HCT116 (cell line): ENCODE measurements at regions of chr10 and their contacts with region 1.

Region 1: DNA sequence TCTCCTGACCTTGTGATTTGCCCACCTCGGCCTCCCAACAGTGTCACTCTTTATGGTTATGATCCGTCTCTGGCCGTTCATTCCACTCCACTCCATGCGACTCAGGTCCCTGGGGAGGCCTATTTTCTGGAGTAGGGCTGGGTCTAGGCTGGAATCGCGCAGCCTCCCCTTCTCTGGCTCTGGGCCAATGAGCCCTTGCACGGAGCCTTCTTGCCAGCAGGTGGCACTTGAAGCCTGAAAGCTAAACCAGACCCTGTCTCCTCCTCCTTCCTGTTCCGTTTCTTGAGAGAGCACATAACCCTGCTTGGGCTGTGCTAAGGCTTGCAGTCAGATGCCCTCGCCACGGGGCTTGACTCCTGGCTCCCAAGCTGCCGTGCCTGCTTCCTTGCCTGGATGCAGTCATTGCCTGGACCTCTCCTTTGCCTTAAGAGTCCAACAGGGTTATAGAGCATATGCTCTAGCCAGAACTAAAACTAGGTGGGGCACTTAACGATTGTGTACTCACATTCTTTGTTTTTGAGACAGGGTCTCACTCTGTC is 9.6 kb upstream of the DNAJB12 start:
- DNase-seq: peak; percentile 82
- ATAC-seq: peak; percentile 94
- H3K4me3 ChIP-seq: peak overlapping the region in 1 of 2 experiments; percentile 22; a peak in 2 of 4 replicates
- H3K27ac ChIP-seq: 0 out of 2 replicates have a peak overlapping the region, but pooled peaks have one; percentile 21
- H3K4me1 ChIP-seq: peaks cover 7 to 19% of the 10 kb centered on the region in 2 experiments
- H3K27me3 ChIP-seq: no peaks in the 10 kb centered on the region
- CTCF ChIP-seq: peak; percentile 85 to 95 (median 85)
- POLR2A ChIP-seq: no peak
- RAD21 ChIP-seq: peak; percentile 98

Region 2: GRCh38 chr10:71634531-71635164 is 729.7 kb before region 1 on chr10:
- CTCF ChIA-PET with region 1: no interaction called
- POLR2A ChIA-PET with region 1: no interaction called
- RAD21 ChIA-PET with region 1: no interaction called
- intact Hi-C with region 1: no loop called
- DNase-seq: no peak
- ATAC-seq: no peak
- H3K4me3 ChIP-seq: no peak overlapping the region
- H3K27ac ChIP-seq: no peak overlapping the region
- H3K4me1 ChIP-seq: no peaks in the 10 kb centered on the region
- H3K27me3 ChIP-seq: no peaks in the 10 kb centered on the region
- CTCF ChIP-seq: no peak
- POLR2A ChIP-seq: no peak
- RAD21 ChIP-seq: no peak

Region 3: GRCh38 chr10:72379776-72380175 is 15.5 kb after region 1 on chr10:
- CTCF ChIA-PET with region 1: no interaction called
- POLR2A ChIA-PET with region 1: no interaction called
- RAD21 ChIA-PET with region 1: no interaction called
- intact Hi-C with region 1: no loop called
- DNase-seq: no peak
- ATAC-seq: no peak
- H3K4me3 ChIP-seq: no peak overlapping the region
- H3K27ac ChIP-seq: no peak overlapping the region
- H3K4me1 ChIP-seq: 0 out of 4 replicates have a peak, but pooled peaks cover 0 to under 1% of the 10 kb centered on the region in 2 experiments
- H3K27me3 ChIP-seq: no peaks in the 10 kb centered on the region
- CTCF ChIP-seq: no peak
- POLR2A ChIP-seq: no peak
- RAD21 ChIP-seq: no peak

Region 4: DNA sequence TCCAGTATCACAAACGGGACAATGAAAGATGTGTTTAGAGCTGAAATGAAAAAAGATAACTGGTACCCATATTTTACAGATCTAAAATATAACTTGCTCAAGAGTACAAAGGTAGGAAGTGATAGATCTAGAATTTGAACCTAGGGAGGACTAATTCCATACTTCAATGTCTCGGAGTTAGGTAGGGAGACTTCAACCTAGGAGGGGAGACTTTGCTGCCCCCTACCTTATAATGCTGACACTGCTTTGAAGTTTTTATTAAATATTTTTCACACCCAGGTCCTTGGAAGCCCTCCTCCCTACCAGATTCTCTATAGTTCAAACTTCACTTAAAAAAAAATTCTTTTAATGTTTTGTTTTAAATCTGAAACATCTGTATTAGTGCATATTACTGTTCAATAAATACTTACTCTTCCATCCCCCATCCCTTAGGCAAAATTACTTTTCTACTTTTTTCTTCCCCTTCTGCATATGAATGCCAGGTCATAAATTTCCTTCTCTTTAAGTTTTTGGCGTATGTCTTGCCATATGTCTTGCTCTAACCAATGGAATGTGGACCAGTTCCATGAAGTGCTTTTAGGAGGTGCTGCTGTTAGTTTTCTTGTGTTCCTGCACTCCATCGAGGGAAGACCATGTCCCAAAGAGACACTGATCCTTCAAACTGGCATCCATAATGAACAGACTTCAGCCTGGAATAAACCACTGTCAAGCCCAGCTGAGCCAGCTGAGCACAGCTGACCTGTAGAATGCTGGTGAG is 203.8 kb after region 1 on chr10:
- CTCF ChIA-PET with region 1: no interaction called
- POLR2A ChIA-PET with region 1: no interaction called
- RAD21 ChIA-PET with region 1: no interaction called
- intact Hi-C with region 1: loop called (anchors 10 kb)
- DNase-seq: peak; percentile 10
- ATAC-seq: peak; percentile 91
- H3K4me3 ChIP-seq: peak overlapping the region in 1 of 2 experiments; percentile 10; a peak in 1 of 4 replicates
- H3K27ac ChIP-seq: peak overlapping the region; percentile 48; the same call in 1 of the 2 replicates
- H3K4me1 ChIP-seq: peaks cover 16 to 18% of the 10 kb centered on the region in 2 experiments
- H3K27me3 ChIP-seq: no peaks in the 10 kb centered on the region
- CTCF ChIP-seq: peak; percentile 26 to 65 (median 56); a peak in 4 of 6 replicates
- POLR2A ChIP-seq: no peak
- RAD21 ChIP-seq: peak; percentile 53

Region 5: GRCh38 chr10:72692057-72692910 is 328.0 kb after region 1 on chr10 and contains the start of gene MCU:
- CTCF ChIA-PET with region 1: no interaction called
- POLR2A ChIA-PET with region 1: no interaction called
- RAD21 ChIA-PET with region 1: no interaction called
- intact Hi-C with region 1: loop called (anchors 2 kb)
- DNase-seq: no peak
- ATAC-seq: peak; percentile 98
- H3K4me3 ChIP-seq: peak within 1 kb of the TSS; percentile 82 to 87
- H3K27ac ChIP-seq: peak within 1 kb of the TSS; percentile 66; the same call in 1 of the 2 replicates
- H3K4me1 ChIP-seq: peaks cover 3 to 24% of the 10 kb centered on the region in 2 experiments; a peak in 3 of 4 replicates
- H3K27me3 ChIP-seq: no peaks in the 10 kb centered on the region
- CTCF ChIP-seq: no peak
- POLR2A ChIP-seq: peak; percentile 68
- RAD21 ChIP-seq: no peak
- total RNA-seq, gene MCU: 26.8 TPM

Region 6: DNA sequence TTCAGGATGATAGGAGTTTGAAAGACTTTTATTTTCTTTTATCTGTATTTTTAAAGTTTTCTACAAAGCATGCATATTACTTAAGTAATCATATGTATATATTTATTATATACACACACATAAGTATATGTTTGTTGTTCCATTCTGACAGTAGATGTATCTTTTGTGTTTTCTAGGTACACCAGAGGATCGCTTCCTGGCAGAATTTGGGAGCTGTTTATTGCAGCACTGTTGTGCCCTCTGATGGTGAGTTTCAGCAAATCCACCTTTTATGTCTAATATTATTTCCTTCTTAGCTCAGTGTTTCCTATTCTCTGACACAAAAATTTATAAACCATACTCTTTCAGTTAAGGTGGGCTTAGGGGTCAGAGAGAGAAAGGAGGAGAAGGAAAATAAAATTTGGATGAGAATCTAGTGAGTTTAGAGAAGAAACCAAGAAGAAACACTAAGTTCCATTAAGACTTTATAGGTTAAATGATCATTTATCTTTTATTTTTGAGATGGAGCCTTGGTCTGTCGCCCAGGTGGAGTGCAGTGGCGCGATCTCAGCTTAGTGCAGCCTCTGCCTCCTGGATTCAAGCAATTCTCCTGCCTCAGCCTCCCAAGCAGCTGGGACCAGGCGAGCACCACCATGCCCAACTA is 470.0 kb after region 1 on chr10:
- CTCF ChIA-PET with region 1: interaction called, 25 read pairs
- POLR2A ChIA-PET with region 1: no interaction called
- RAD21 ChIA-PET with region 1: interaction called, 3 to 5 read pairs
- intact Hi-C with region 1: loop called (anchors 1 kb)
- DNase-seq: peak; percentile 48
- ATAC-seq: peak; percentile 71
- H3K4me3 ChIP-seq: no peak overlapping the region
- H3K27ac ChIP-seq: no peak overlapping the region
- H3K4me1 ChIP-seq: no peaks in the 10 kb centered on the region
- H3K27me3 ChIP-seq: no peaks in the 10 kb centered on the region
- CTCF ChIP-seq: peak; percentile 52 to 83 (median 65)
- POLR2A ChIP-seq: no peak
- RAD21 ChIP-seq: peak; percentile 90

Region 7: GRCh38 chr10:72875250-72876055 is 511.1 kb after region 1 on chr10:
- CTCF ChIA-PET with region 1: no interaction called
- POLR2A ChIA-PET with region 1: no interaction called
- RAD21 ChIA-PET with region 1: no interaction called
- intact Hi-C with region 1: loop called (anchors 1 kb)
- DNase-seq: peak; percentile 12
- ATAC-seq: peak; percentile 52; the same call in 1 of the 2 replicates
- H3K4me3 ChIP-seq: no peak overlapping the region
- H3K27ac ChIP-seq: no peak overlapping the region
- H3K4me1 ChIP-seq: no peaks in the 10 kb centered on the region
- H3K27me3 ChIP-seq: no peaks in the 10 kb centered on the region
- CTCF ChIP-seq: peak; percentile 47 to 73 (median 59); a peak in 5 of 6 replicates
- POLR2A ChIP-seq: no peak
- RAD21 ChIP-seq: peak; percentile 87

Region 8: DNA sequence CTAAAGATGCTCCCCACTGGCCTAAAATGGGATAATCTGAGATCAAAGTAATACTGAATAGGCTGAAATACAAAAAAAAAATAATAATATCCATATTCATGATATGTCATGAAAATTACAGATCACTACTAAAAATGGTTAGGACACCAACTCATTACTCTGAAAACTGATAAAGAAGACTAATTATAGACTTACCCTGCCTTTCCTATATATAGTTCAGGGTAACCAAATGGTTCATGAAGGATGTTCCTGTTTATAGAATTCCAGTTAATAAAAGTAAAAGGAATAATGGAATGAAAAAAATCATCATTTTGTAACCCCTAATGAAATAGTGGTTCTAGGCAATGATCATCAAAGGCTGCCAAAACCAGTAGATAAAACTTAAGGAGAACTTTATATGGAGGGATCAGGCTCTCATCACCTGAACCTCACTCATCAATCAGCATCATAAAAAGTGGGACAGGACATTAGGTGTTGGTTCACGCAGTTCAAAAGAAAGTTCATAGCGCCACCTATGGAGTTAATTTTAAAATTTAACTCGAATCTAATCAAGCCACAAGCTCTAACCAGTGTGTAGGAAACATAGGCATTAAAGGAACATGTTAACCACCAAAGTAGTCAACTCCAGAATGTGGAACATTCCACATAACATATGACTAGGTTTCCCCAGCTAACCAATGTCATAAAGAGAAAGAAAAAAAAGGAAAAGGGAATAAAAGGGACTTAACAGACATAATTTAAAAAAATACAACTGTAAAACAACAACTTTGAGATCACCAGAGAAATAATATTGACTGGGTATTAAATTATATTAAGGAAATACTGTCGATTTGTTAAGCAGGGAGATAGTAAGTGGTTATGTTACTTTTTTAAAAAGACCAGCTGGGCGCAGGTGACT is 696.7 kb after region 1 on chr10:
- CTCF ChIA-PET with region 1: interaction called, 7 read pairs
- POLR2A ChIA-PET with region 1: no interaction called
- RAD21 ChIA-PET with region 1: interaction called in 1 of 2 experiments, 4 read pairs
- intact Hi-C with region 1: loop called (anchors 1 kb)
- DNase-seq: peak; percentile 19
- ATAC-seq: peak; percentile 84
- H3K4me3 ChIP-seq: no peak overlapping the region
- H3K27ac ChIP-seq: no peak overlapping the region
- H3K4me1 ChIP-seq: no peaks in the 10 kb centered on the region
- H3K27me3 ChIP-seq: no peaks in the 10 kb centered on the region
- CTCF ChIP-seq: peak in 2 of 3 experiments; percentile 29 to 68; a peak in 3 of 6 replicates
- POLR2A ChIP-seq: no peak
- RAD21 ChIP-seq: peak; percentile 61

Region 9: GRCh38 chr10:73167783-73168464 is 803.6 kb after region 1 on chr10 and contains the starts of genes ECD and FAM149B1:
- CTCF ChIA-PET with region 1: no interaction called
- POLR2A ChIA-PET with region 1: no interaction called
- RAD21 ChIA-PET with region 1: no interaction called
- intact Hi-C with region 1: loop called (anchors 10 kb)
- DNase-seq: peak; percentile 90
- ATAC-seq: peak; percentile 95
- H3K4me3 ChIP-seq: peak within 1 kb of the TSS; percentile 73 to 99
- H3K27ac ChIP-seq: peak within 1 kb of the TSS; percentile 75
- H3K4me1 ChIP-seq: peaks cover 0 to 10% of the 10 kb centered on the region in 2 experiments; a peak in 1 of 4 replicates
- H3K27me3 ChIP-seq: no peaks in the 10 kb centered on the region
- CTCF ChIP-seq: 0 out of 6 replicates have a peak, but pooled peaks of 1 of the 3 experiments have one; percentile 7
- POLR2A ChIP-seq: peak; percentile 86
- RAD21 ChIP-seq: no peak
- total RNA-seq, gene ECD: 25.4 TPM
- total RNA-seq, gene FAM149B1: 17.5 TPM